Mucosa of descending colon (tissue), 3 donors: ENCODE measurements at regions of chr17 and their contacts with region 1.

Region 1: GRCh38 chr17:60435244-60436167 is 13.2 kb downstream of the CHCT1 start:
- DNase-seq: peak in 2 of 3 donors; percentile 33 to 81
- ATAC-seq: peak; percentile 90
- H3K4me3 ChIP-seq: no peak overlapping the region
- H3K4me1 ChIP-seq: no peaks in the 10 kb centered on the region
- CTCF ChIP-seq: peak; percentile 68

Region 2: GRCh38 chr17:60231234-60231633 is 204.3 kb before region 1 on chr17:
- intact Hi-C with region 1: loop called in 1 of 2 experiments (anchors 10 kb)
- DNase-seq: peak in 1 of 3 donors; percentile 20
- ATAC-seq: peak; percentile 56
- H3K4me3 ChIP-seq: no peak overlapping the region
- H3K4me1 ChIP-seq: no peaks in the 10 kb centered on the region
- CTCF ChIP-seq: peak; percentile 8

Region 3: GRCh38 chr17:60284709-60285108 is 150.8 kb before region 1 on chr17:
- intact Hi-C with region 1: no loop called
- DNase-seq: no peak
- ATAC-seq: no peak
- H3K4me3 ChIP-seq: no peak overlapping the region
- H3K4me1 ChIP-seq: no peaks in the 10 kb centered on the region
- CTCF ChIP-seq: no peak

Region 4: DNA sequence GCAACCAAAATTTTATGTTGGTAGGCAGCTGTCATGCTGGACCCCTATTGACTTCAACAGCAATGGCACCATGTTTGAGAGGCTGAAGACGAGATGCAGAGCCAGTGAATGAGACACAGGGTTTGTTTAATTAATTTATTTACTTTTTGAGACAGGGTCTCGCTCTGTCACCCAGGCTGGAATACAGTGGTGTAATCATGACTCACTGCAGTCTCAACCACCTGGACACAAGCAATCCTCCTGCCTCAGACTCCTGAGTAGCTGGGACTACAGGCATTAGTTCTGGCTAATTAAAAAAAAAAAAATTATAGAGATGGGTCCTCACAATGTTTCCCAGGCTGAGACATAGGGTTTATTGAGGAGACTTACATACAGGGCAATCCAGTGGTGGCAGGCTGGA is 128.2 kb after region 1 on chr17:
- intact Hi-C with region 1: no loop called
- DNase-seq: no peak
- ATAC-seq: no peak
- H3K4me3 ChIP-seq: no peak overlapping the region
- H3K4me1 ChIP-seq: no peaks in the 10 kb centered on the region
- CTCF ChIP-seq: no peak